ENCODE measurements at regions of chr4 and their contacts with region 1.

Region 1: DNA sequence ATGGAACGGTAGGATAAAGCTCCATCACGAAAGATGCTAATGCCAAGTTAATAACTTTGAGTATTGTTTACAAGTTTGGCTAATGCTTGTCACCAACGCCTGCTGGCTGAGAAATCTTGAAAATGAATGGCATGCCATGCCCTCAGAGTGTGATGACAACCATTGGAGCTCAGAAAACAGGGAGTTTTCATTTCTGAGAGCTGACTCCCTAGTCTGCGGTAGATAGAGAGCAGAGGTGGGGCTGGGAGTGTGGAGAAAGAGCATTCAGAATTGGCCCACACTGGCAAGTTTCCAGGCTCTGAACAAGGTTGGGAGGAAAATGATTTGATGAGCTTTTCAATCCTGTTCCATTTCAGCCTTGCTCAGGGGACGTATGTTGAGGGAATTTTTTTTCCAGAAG is 183.9 kb downstream of the CPEB2 start:
- DNase-seq: no peak
- H3K4me3 ChIP-seq: no peak overlapping the region
- CTCF ChIP-seq: no peak

Region 2: GRCh38 chr4:15197005-15197404 is 10.9 kb after region 1 on chr4:
- CTCF ChIA-PET with region 1: interaction called, 11 read pairs
- POLR2A ChIA-PET with region 1: interaction called, 3 read pairs
- DNase-seq: no peak
- H3K4me3 ChIP-seq: no peak overlapping the region
- CTCF ChIP-seq: peak; percentile 32

Measured in AG04449 (cell line).